HAP-1 (cell line): ENCODE measurements at regions of chr11 and their contacts with region 1.

Region 1: GRCh38 chr11:73177778-73178577 is 35.9 kb upstream of the FCHSD2 start:
- DNase-seq: peak; percentile 32 to 78
- H3K4me3 ChIP-seq: no peak overlapping the region
- H3K4me1 ChIP-seq: no peaks in the 10 kb centered on the region
- H3K27me3 ChIP-seq: no peaks in the 10 kb centered on the region

Region 2: DNA sequence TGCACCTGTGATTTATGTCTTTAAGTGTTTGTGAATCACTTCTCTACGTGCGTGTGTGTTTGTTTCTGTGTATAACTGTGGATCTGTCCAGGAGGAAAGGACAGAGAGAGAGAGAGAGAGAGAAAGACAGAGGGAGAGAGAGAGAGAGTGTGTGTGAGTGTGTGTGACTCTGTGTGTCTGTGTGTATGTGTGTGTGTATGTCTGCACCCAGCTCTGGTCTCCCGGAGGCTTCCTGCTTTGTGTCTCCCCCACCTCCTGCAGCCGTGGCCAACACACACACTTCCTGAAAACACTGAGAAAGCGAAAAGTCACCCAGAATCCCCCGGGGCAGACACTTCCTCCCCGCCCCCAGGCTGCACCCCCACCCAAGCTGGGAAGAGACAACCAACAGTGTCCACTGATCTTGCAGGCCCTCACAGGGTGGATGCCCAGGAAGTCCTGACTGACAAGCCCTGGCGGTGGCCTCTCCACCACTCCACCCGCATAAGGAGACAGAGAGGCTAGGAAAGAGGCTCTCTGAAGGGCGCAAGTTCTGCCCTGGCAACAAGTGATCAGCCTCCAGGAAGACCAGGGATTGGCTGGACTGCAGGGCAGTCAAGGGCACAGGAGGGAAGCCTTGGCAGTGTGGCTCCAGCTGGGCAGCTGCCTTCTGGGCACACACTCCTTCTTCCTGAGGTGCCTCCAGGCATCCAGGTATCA is 455.8 kb before region 1 on chr11:
- in situ Hi-C with region 1: loop called (anchors 5 kb)
- DNase-seq: peak; percentile 54 to 79
- H3K4me3 ChIP-seq: peak overlapping the region; percentile 22
- H3K4me1 ChIP-seq: peaks cover 5% of the 10 kb centered on the region
- H3K27me3 ChIP-seq: no peaks in the 10 kb centered on the region

Region 3: GRCh38 chr11:72828081-72828682 is 349.8 kb before region 1 on chr11:
- in situ Hi-C with region 1: loop called (anchors 5 kb)
- DNase-seq: no peak
- H3K4me3 ChIP-seq: no peak overlapping the region
- H3K4me1 ChIP-seq: no peaks in the 10 kb centered on the region
- H3K27me3 ChIP-seq: no peaks in the 10 kb centered on the region

Region 4: GRCh38 chr11:73671701-73672100 is 493.7 kb after region 1 on chr11:
- in situ Hi-C with region 1: no loop called
- DNase-seq: no peak
- H3K4me3 ChIP-seq: no peak overlapping the region
- H3K4me1 ChIP-seq: peaks cover 5% of the 10 kb centered on the region
- H3K27me3 ChIP-seq: no peaks in the 10 kb centered on the region